ENCODE measurements at regions of chr2 and their contacts with region 1.

Region 1: DNA sequence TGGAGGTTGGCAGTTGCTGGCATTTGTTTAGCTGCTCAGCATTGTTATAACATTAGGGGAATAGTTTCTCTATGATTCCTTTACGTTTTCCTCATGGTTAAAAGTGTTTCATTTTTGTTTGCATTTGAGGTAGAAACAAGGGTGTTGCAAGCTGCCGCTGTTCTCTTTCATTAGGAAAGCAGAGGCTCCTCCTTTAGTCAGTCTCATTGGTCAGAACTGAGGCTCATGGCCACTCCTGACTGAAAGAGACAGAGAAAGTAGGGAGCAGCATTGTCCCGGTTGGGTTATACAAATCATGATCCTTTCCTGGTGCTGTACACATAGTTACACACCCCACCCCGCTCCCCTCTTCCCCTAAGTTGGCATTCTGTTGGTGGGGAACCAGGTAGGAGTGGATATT is 59.8 kb upstream of the PTH2R start:
- DNase-seq: no peak
- H3K4me3 ChIP-seq: no peak overlapping the region
- H3K27ac ChIP-seq: no peak overlapping the region
- H3K4me1 ChIP-seq: peaks cover 0 to 14% (median 0%) of the 10 kb centered on the region in 4 donors
- H3K27me3 ChIP-seq: no peaks in the 10 kb centered on the region
- CTCF ChIP-seq: no peak

Region 2: DNA sequence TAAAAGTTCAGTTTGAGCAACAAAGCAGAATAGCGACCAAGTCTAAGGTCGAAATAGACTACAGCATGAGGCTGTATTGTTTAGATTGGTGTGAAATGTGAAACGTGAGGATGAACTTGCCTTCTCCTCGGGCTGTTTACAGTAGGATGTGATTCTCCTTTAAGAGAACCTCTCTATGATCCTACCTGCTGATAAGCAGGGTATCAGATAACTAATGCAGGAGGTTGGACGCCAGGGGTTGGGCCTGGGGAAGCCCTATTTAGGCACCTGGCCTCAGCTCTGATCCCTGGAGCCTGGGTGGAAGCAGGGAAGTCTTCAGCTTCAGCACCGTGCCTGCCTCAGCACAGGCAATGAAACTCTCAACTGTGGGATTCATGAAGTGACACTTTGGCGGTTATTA is 233.8 kb before region 1 on chr2:
- intact Hi-C with region 1: no loop called
- DNase-seq: no peak
- H3K4me3 ChIP-seq: no peak overlapping the region
- H3K27ac ChIP-seq: no peak overlapping the region
- H3K4me1 ChIP-seq: peaks cover 0 to 6% (median 2%) of the 10 kb centered on the region in 4 donors
- H3K27me3 ChIP-seq: peaks cover 0 to 15% of the 10 kb centered on the region in 2 donors
- CTCF ChIP-seq: no peak

Region 3: GRCh38 chr2:208280933-208281332 is 65.8 kb before region 1 on chr2:
- intact Hi-C with region 1: loop called (anchors 10 kb)
- DNase-seq: no peak
- H3K4me3 ChIP-seq: no peak overlapping the region
- H3K27ac ChIP-seq: no peak overlapping the region
- H3K4me1 ChIP-seq: no peaks in the 10 kb centered on the region
- H3K27me3 ChIP-seq: no peaks in the 10 kb centered on the region
- CTCF ChIP-seq: no peak

Measured in tibial artery (tissue), 4 donors.